ENCODE measurements at regions of chr11 and their contacts with region 1.

Region 1: DNA sequence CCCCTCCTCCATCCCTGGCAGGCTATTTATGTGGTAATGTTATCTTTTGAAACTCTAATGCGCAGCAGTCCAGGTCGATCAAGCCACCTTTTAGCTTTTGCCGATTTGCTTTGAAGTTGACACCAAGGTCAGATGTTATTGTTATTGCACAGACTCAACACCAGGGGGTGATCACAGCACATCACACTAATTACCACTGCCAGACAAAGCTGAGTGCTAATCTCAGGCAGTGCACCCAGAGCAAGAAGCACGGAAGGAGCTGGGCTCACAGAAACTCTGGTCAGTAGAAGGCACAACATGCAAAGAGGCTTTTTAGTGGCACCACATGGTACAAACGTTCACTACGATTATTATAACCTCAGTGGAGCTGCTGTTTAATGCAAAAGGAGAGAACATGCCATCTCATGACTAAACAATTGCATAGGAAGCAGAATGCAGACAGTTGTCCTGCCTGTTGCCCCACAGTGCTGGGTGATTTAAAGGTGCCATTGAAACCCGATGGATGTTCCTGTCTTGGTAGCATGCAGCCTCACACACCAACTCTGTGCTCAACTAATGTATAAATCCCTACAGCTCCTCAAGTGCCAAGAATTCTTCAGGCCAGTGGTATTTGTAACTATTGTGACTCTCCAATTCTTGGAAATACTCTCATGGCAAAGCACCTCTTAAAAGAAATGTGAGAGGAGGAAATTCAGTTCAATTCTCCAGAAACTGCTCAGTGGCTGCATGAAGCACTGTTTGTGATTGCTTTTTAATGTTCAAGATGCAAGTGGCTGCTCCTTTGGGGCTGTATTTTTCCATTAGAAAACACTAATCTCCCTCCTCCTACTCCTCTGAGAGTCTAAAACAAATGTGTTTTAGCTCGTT is 353.9 kb upstream of the DDI1 start:
- DNase-seq: peak; percentile 1 to 70 (median 20)
- ATAC-seq: peak; percentile 90
- H3K4me3 ChIP-seq: no peak overlapping the region
- H3K4me3 Mint-ChIP-seq: no peak overlapping the region
- H3K27ac ChIP-seq: no peak overlapping the region
- H3K27ac Mint-ChIP-seq: no peak overlapping the region
- H3K4me1 ChIP-seq: peaks cover 5% of the 10 kb centered on the region
- H3K4me1 Mint-ChIP-seq: peaks cover 6% of the 10 kb centered on the region
- H3K27me3 ChIP-seq: peaks cover 0 to 4% of the 10 kb centered on the region in 2 experiments
- H3K27me3 Mint-ChIP-seq: no peaks in the 10 kb centered on the region
- CTCF ChIP-seq: peak; percentile 57

Region 2: DNA sequence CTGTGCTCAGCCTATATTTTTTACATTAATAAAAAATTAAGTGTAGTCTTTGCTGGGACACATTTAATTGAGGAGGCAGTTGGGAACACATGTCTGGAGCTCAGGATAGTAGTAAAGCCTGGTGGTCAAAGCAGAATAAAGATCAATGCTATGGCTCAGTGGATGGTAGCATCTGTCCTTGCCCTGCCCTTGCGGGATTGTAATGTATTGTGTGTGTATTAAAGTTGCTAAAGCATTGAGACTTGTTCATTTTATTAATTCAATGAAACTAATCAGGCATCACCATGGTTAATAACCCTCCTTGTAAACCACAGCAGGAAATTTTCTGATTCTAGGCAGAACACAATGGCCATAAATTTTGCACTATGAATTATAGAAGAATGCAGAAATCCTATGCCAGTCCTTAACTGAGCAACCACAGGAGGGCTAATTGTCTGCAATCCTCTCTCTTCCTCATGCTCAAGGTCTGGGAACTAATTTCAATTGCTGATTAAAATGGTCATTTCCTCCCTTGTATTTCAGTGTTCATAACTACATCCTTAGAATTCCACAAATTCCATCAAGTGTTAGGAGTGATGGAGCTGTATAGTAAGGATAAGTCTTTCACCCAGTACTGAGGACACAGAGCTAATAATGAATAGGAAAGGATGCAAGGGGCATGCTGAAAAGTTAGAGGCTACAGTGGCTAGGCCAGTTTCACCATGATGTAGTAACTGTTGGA is 49.3 kb before region 1 on chr11:
- CTCF ChIA-PET with region 1: no interaction called
- POLR2A ChIA-PET with region 1: no interaction called
- intact Hi-C with region 1: no loop called
- DNase-seq: no peak
- ATAC-seq: no peak
- H3K4me3 ChIP-seq: no peak overlapping the region
- H3K4me3 Mint-ChIP-seq: no peak overlapping the region
- H3K27ac ChIP-seq: no peak overlapping the region
- H3K27ac Mint-ChIP-seq: no peak overlapping the region
- H3K4me1 ChIP-seq: no peaks in the 10 kb centered on the region
- H3K4me1 Mint-ChIP-seq: no peaks in the 10 kb centered on the region
- H3K27me3 ChIP-seq: no peaks in the 10 kb centered on the region
- H3K27me3 Mint-ChIP-seq: no peaks in the 10 kb centered on the region
- CTCF ChIP-seq: no peak

Region 3: DNA sequence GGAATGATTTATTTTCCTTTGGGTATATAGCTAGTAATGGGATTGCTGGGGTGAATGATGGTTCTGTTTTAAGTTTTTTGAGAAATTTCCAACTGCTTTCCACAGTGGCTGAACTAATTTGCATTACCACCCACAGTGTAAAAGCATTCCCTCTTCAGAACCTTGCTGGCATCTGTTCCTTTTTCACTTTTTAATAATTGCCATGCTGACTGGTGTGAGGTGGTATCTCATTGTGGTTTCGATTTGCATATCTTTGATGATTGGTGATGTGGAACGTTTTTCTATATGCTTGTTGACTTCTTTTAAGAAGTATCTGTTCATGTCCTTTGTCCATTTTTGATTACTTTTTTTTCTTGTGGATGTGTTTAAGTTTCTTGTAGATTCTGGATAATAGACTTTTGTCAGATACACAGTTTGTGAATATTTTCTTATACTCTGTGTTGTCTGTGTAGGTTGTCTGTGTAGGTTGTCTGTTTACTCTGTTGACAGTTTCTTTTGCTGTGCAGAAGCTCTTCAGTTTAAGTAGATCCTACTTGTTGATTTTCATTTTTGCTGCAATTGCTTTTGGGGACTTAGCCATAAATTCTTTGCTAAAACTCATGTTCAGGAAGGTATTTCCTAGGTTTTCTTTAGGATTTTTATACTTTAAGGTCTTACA is 62.1 kb after region 1 on chr11:
- CTCF ChIA-PET with region 1: no interaction called
- POLR2A ChIA-PET with region 1: no interaction called
- intact Hi-C with region 1: no loop called
- DNase-seq: no peak
- ATAC-seq: no peak
- H3K4me3 ChIP-seq: no peak overlapping the region
- H3K4me3 Mint-ChIP-seq: no peak overlapping the region
- H3K27ac ChIP-seq: no peak overlapping the region
- H3K27ac Mint-ChIP-seq: no peak overlapping the region
- H3K4me1 ChIP-seq: no peaks in the 10 kb centered on the region
- H3K4me1 Mint-ChIP-seq: peaks cover 6% of the 10 kb centered on the region
- H3K27me3 ChIP-seq: no peaks in the 10 kb centered on the region
- H3K27me3 Mint-ChIP-seq: no peaks in the 10 kb centered on the region
- CTCF ChIP-seq: no peak

Region 4: DNA sequence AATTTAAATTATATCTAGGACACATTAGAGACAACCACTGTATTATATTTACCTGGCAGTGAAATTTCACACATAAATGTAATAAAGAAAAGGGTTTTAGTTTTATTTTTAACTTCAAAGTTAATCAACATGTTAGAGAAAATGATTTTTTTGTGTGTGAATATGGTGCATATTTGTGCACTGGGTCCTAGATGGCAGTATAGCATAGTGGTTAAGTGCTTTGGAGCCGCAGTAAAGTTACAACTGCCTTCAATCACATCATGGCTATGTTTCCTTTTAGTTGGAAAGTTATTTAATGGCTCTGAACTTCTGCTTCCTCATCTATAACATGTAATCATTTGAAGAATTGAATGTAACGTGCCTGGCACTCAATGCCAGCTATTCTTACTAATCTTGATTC is 245.0 kb after region 1 on chr11:
- CTCF ChIA-PET with region 1: no interaction called
- POLR2A ChIA-PET with region 1: no interaction called
- intact Hi-C with region 1: loop called in 1 of 2 experiments (anchors 10 kb)
- DNase-seq: no peak
- ATAC-seq: no peak
- H3K4me3 ChIP-seq: no peak overlapping the region
- H3K4me3 Mint-ChIP-seq: no peak overlapping the region
- H3K27ac ChIP-seq: no peak overlapping the region
- H3K27ac Mint-ChIP-seq: no peak overlapping the region
- H3K4me1 ChIP-seq: no peaks in the 10 kb centered on the region
- H3K4me1 Mint-ChIP-seq: no peaks in the 10 kb centered on the region
- H3K27me3 ChIP-seq: no peaks in the 10 kb centered on the region
- H3K27me3 Mint-ChIP-seq: peaks cover 4% of the 10 kb centered on the region
- CTCF ChIP-seq: no peak

Region 5: GRCh38 chr11:104148074-104148473 is 465.5 kb after region 1 on chr11:
- CTCF ChIA-PET with region 1: interaction called, 4 read pairs
- POLR2A ChIA-PET with region 1: no interaction called
- intact Hi-C with region 1: loop called in 1 of 2 experiments (anchors 5 kb)
- DNase-seq: no peak
- ATAC-seq: no peak
- H3K4me3 ChIP-seq: no peak overlapping the region
- H3K4me3 Mint-ChIP-seq: no peak overlapping the region
- H3K27ac ChIP-seq: no peak overlapping the region
- H3K27ac Mint-ChIP-seq: no peak overlapping the region
- H3K4me1 ChIP-seq: no peaks in the 10 kb centered on the region
- H3K4me1 Mint-ChIP-seq: no peaks in the 10 kb centered on the region
- H3K27me3 ChIP-seq: no peaks in the 10 kb centered on the region
- H3K27me3 Mint-ChIP-seq: no peaks in the 10 kb centered on the region
- CTCF ChIP-seq: no peak

Measured in CD4-positive, alpha-beta T cell (primary cell).